ENCODE measurements at regions of chr19 and their contacts with region 1.

Region 1: GRCh38 chr19:6092329-6093286 is 17.7 kb downstream of the RFX2 start:
- DNase-seq: no peak
- H3K4me3 ChIP-seq: peak overlapping the region; percentile 59
- H3K27ac ChIP-seq: peak overlapping the region; percentile 94
- H3K27me3 ChIP-seq: no peaks in the 10 kb centered on the region
- CTCF ChIP-seq: 0 out of 2 replicates have a peak, but pooled peaks have one; percentile 1

Region 2: GRCh38 chr19:6103217-6103644 is 10.6 kb after region 1 on chr19:
- CTCF ChIA-PET with region 1: interaction called, 3 read pairs
- POLR2A ChIA-PET with region 1: interaction called, 14 read pairs
- DNase-seq: peak; percentile 56
- H3K4me3 ChIP-seq: no peak overlapping the region
- H3K27ac ChIP-seq: peak overlapping the region; percentile 13
- H3K27me3 ChIP-seq: no peaks in the 10 kb centered on the region
- CTCF ChIP-seq: no peak

Measured in AG04450 (cell line).